Gastrocnemius medialis (tissue), 4 donors: ENCODE measurements at regions of chr12 and their contacts with region 1.

Region 1: DNA sequence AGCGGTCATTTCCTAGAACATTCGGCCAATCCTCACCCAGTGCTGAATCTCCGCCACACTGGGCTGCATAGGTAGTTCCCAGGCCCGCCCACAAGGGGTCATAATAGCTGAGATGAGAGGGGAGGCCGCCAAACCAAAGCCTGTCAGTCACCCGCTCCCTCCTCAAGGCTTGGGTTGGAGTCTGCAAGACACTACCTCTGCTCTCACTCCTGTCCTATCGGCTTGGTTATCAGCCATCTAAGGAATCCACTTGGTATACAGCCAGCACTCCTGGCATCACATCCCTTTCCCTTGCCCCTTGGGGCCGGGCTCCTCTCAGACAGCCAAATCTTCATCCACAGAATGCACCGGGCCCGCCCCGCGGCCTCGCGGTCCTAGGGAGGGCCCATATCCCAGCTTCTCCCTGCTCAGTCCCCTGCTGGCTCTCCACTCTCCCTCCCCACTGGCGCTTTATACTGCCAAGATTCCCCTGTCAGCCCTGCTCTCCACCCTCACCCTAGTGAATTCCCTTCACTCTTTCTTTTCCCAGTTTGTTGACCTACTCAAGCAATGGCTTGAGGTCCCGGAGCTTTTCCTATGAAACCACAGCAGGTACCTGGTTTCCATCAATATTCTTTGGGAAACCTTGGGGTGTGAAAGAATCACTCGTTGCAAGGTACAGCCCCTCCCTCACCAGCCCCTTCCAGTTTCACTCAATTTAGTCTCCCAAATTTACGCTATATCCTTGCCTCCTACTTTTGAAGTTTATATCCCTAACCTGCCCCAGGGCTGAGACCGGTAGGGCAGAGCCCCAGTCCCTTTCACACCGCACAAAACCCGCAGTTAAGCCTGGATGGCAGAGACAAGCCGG is 1.4 kb downstream of the IFFO1 start:
- DNase-seq: peak; percentile 64 to 87
- ATAC-seq: peak; percentile 26 to 29
- H3K4me3 ChIP-seq: peak overlapping the region; percentile 67 to 88 (median 77)
- H3K27ac ChIP-seq: peak overlapping the region; percentile 90 to 99 (median 92)
- H3K4me1 ChIP-seq: peaks cover 66% of the 10 kb centered on the region in 2 donors
- H3K27me3 ChIP-seq: no peaks in the 10 kb centered on the region
- CTCF ChIP-seq: peak in 4 of 5 experiments; percentile 64 to 70 (median 68)
- POLR2A ChIP-seq: no peak

Region 2: DNA sequence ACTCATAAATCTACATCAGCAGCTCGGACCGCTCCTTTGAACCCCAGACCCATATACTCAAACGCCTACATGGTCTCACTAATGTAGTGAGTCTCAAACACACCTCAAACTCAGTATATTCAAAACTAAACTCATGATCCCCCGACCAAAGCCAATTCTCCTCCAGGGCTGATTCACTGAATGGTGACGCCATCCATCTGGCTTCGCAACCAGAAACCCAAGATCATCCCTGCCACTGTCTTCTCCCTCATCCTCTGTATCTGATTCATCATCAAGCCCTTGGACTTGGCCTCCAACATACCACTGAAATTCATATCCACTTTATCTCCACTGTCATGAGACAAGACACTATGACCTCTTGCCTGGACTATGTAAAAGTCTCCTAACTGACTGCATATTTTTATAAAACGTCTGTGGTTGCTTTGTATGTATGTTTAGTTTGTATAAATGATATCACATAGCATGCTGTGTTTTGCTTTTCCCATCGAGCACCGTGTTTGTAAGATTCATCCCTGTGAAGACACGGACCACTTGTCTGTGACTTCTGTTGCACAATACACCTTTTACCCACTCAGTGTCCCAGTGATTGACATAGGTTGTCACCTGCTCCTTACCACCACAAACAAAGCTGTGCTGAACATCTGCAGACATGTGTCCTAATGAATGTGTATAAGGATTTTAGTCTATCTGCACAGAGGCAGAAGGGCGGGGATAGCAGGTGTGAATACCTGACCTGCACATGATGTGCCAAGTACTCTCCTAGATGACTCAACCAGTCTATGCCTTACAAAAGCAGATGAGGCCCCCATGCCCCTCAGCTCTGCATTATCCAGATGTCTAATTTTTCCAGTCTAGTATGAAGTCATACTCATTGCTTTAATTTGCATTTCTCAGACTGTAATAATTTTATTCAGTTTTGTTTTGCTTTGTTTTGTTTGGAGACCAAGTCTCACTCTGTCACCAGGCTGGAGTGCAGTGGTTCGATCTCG is 506.9 kb before region 1 on chr12:
- in situ Hi-C with region 1: no loop called
- intact Hi-C with region 1: no loop called
- DNase-seq: no peak
- ATAC-seq: no peak
- H3K4me3 ChIP-seq: no peak overlapping the region
- H3K27ac ChIP-seq: no peak overlapping the region
- H3K4me1 ChIP-seq: no peaks in the 10 kb centered on the region
- H3K27me3 ChIP-seq: peaks cover 0 to 2% (median 0%) of the 10 kb centered on the region in 3 donors
- CTCF ChIP-seq: no peak
- POLR2A ChIP-seq: no peak

Region 3: GRCh38 chr12:6312529-6313325 is 241.7 kb before region 1 on chr12:
- in situ Hi-C with region 1: no loop called
- intact Hi-C with region 1: no loop called
- DNase-seq: no peak
- ATAC-seq: no peak
- H3K4me3 ChIP-seq: no peak overlapping the region
- H3K27ac ChIP-seq: no peak overlapping the region
- H3K4me1 ChIP-seq: no peaks in the 10 kb centered on the region
- H3K27me3 ChIP-seq: peaks cover 14 to 16% (median 16%) of the 10 kb centered on the region in 3 donors
- CTCF ChIP-seq: no peak
- POLR2A ChIP-seq: no peak

Region 4: DNA sequence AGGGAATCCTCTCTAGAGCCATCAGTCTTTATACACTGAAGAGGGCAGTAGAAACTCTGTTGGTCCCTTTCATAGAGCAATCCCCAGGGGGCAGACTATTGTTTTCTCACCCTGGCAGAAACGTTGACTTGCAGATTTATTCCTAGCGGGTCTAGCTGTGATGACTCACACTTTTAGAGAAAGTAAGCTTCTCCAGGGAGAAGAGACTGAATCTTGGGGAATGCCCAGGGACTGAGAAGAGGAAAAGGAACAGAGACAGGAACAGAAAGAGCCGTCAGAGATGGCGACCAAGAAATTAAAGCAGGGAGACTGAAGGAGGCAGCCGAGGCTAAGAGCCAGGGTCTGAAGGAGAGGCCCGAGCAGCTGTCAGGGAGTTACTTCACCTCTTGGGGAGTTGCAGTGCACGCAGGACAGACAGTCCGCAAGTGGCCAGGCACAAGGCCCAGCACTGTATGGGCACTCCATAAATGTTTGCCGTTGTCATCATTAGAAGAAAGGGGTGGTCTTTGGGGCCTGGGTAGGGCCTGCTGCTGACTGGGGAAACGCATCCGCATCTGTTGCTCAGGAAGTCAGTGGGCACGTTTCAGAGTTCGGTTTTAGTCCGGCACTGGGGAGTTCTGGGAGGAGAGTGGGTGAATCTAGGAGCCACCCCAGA is 230.9 kb before region 1 on chr12:
- in situ Hi-C with region 1: no loop called
- intact Hi-C with region 1: loop called (anchors 1 kb)
- DNase-seq: peak; percentile 70 to 86
- ATAC-seq: peak; percentile 77 to 78
- H3K4me3 ChIP-seq: peak overlapping the region; percentile 4 to 27 (median 12)
- H3K27ac ChIP-seq: peak overlapping the region; percentile 70 to 85 (median 81)
- H3K4me1 ChIP-seq: peaks cover 57 to 58% of the 10 kb centered on the region in 2 donors
- H3K27me3 ChIP-seq: no peaks in the 10 kb centered on the region
- CTCF ChIP-seq: peak; percentile 30 to 45 (median 40)
- POLR2A ChIP-seq: no peak

Region 5: GRCh38 chr12:6423267-6424007 is 131.0 kb before region 1 on chr12:
- in situ Hi-C with region 1: loop called in 2 of 4 experiments (anchors 10 to 25 kb)
- intact Hi-C with region 1: loop called (anchors 1 kb)
- DNase-seq: peak; percentile 77 to 90
- ATAC-seq: peak; percentile 98 to 99
- H3K4me3 ChIP-seq: no peak overlapping the region
- H3K27ac ChIP-seq: peak overlapping the region in 2 of 4 donors; percentile 30 to 56
- H3K4me1 ChIP-seq: peaks cover 0 to 5% of the 10 kb centered on the region in 2 donors
- H3K27me3 ChIP-seq: no peaks in the 10 kb centered on the region
- CTCF ChIP-seq: peak; percentile 88 to 94 (median 91)
- POLR2A ChIP-seq: no peak

Region 6: GRCh38 chr12:6607751-6608591 is 53.6 kb after region 1 on chr12:
- in situ Hi-C with region 1: no loop called
- intact Hi-C with region 1: loop called (anchors 1 kb)
- DNase-seq: peak in 1 of 2 donors; percentile 52
- ATAC-seq: peak; percentile 18 to 34
- H3K4me3 ChIP-seq: peak overlapping the region in 1 of 4 donors; percentile 98
- H3K27ac ChIP-seq: peak overlapping the region; percentile 95 to 99 (median 97)
- H3K4me1 ChIP-seq: peaks cover 44 to 52% of the 10 kb centered on the region in 2 donors
- H3K27me3 ChIP-seq: no peaks in the 10 kb centered on the region
- CTCF ChIP-seq: no peak
- POLR2A ChIP-seq: no peak

Region 7: DNA sequence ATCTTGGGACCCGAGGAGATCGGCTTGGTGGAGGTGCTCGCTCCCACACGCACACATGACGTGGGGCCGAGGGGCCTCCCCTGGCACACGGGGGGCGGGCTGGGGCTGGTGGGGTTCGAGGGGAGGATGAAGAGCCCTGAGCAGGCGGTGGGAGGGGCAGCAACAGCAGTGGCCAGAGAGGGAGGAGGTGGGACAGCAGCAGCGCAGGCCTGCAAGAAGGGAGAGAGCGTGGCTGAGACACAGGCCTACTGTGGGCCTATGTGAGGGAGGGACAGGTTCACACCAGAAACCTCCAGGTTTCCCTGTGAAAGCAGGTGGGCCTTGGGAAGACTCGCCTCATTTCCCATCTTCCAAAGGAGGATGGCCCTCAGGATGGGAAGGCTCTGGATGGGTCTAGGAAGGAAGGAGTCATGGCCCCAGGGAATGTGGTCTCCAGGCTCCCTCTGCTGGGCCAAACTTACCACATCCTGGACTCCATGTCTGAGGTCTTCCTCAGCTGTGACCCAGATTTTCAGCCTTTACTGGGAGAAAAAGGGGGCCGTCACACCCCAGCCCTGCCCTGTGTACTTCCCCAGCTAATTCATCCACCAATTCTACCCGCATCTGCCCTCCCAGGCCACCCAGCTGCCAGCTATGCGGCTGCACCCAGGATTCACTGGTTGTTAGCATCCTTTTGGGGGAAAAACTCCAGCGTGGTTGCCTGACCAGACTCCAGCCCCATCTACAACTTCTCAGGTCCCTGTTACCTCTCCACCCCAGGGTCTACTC is 143.4 kb after region 1 on chr12:
- in situ Hi-C with region 1: no loop called
- intact Hi-C with region 1: no loop called
- DNase-seq: no peak
- ATAC-seq: no peak
- H3K4me3 ChIP-seq: no peak overlapping the region
- H3K27ac ChIP-seq: no peak overlapping the region
- H3K4me1 ChIP-seq: peaks cover 0 to 2% of the 10 kb centered on the region in 2 donors
- H3K27me3 ChIP-seq: peaks cover 54 to 81% (median 69%) of the 10 kb centered on the region in 3 donors
- CTCF ChIP-seq: no peak
- POLR2A ChIP-seq: no peak

Region 8: DNA sequence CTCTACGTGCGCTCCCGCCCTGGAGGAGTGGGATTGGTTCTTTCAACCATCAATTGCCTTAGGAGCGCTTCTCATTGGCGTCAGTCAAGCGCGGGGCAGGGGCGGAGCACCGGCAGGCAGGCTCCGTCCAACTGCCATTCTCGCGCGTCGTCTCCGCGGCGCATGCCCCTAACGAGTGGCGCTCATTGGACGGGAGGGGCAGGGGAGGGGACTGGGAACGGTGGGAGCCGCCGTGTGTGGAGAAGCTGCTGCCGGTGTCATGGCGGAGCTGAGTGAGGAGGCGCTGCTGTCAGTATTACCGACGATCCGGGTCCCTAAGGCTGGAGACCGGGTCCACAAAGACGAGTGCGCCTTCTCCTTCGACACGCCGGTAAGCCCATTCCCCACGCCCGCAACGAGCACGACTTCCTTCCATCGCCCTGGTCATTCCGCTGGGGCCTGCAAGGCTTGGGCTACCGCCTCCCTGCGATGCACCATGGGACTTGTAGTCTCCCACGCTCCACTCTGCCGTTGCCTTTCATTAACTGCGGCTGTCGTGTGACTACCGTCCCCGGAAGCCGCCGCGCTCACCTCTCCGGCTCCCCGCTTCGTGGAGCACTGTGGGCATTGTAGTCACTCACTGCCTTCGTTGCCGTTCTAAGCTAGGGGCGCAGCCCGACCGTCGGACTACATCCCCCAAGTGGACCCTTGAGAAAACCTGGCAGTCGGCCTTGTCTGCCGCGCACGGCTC is 297.7 kb after region 1 on chr12 and contains the start of gene USP5:
- in situ Hi-C with region 1: no loop called
- intact Hi-C with region 1: loop called (anchors 10 kb)
- DNase-seq: peak; percentile 99
- ATAC-seq: peak; percentile 85 to 88
- H3K4me3 ChIP-seq: peak within 1 kb of the TSS; percentile 68 to 83 (median 74)
- H3K27ac ChIP-seq: peak within 1 kb of the TSS; percentile 86 to 97 (median 92)
- H3K4me1 ChIP-seq: peaks cover 13 to 17% of the 10 kb centered on the region in 2 donors
- H3K27me3 ChIP-seq: no peaks in the 10 kb centered on the region
- CTCF ChIP-seq: peak in 2 of 5 experiments; percentile 13 to 23
- POLR2A ChIP-seq: peak in 1 of 2 donors; percentile 64
- total RNA-seq, gene USP5: 66.4 to 120 (median 74.1) TPM